ENCODE measurements at regions of chr9 and their contacts with region 1.

Region 1: DNA sequence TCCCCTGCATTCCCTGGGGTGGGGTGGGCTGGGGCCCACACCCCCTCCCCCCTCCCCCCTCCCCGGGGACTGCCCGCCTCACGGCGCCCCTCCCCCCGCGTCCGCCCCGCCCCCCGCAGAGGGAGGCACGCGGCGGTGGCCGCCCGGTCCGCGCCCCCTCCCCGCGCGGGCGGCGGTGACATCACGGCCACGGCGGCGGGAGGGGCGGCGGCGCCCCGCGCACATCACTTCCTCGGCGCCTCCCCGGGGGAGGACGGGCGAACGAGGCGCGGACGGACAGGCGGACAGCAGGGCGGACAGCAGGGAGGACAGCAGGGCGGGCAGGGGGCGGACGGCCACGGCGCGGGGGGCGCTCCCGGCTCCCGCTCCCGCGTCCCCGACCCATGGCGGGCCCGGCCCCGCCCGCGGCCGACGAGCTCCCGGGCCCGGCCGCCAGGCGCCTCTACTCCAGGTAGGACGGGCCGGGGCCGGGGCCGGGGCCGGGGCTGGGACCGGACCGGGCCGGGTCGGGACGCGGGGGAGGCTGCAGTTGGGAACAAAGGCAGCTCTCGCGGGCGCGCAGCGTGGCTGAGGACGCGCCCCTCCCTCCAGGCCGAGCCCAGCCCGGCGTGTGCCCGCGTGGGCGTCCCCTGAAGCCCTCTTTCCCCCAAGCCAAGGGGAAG is at the start of gene GPSM1:
- DNase-seq: peak; percentile 94
- H3K4me3 ChIP-seq: peak within 1 kb of the TSS; percentile 82 to 84
- H3K27ac ChIP-seq: peak within 1 kb of the TSS; percentile 87 to 98
- H3K4me1 ChIP-seq: peaks cover 24 to 50% of the 10 kb centered on the region in 2 experiments
- H3K27me3 ChIP-seq: no peaks in the 10 kb centered on the region
- CTCF ChIP-seq: no peak
- EP300 ChIP-seq: no peak; a peak in 1 of 4 replicates
- RAD21 ChIP-seq: no peak
- polyA plus RNA-seq, gene GPSM1: 22.8 and 26.7 TPM in 2 replicates

Region 2: GRCh38 chr9:136339173-136339957 is 11.9 kb after region 1 on chr9:
- CTCF ChIA-PET with region 1: interaction called, 10 read pairs
- POLR2A ChIA-PET with region 1: no interaction called
- DNase-seq: peak; percentile 83
- H3K4me3 ChIP-seq: peak overlapping the region in 1 of 2 experiments; percentile 29; a peak in 1 of 4 replicates
- H3K27ac ChIP-seq: no peak overlapping the region
- H3K4me1 ChIP-seq: no peaks in the 10 kb centered on the region; a peak in 1 of 4 replicates
- H3K27me3 ChIP-seq: no peaks in the 10 kb centered on the region
- CTCF ChIP-seq: peak; percentile 73
- EP300 ChIP-seq: no peak
- RAD21 ChIP-seq: peak; percentile 62

Region 3: GRCh38 chr9:136345281-136346156 is 18.1 kb after region 1 on chr9:
- CTCF ChIA-PET with region 1: interaction called, 25 read pairs
- POLR2A ChIA-PET with region 1: interaction called, 3 read pairs
- DNase-seq: peak; percentile 74
- H3K4me3 ChIP-seq: no peak overlapping the region
- H3K27ac ChIP-seq: peak overlapping the region in 1 of 2 experiments; percentile 58; a peak in 1 of 4 replicates
- H3K4me1 ChIP-seq: peaks cover 0 to 49% of the 10 kb centered on the region in 2 experiments; a peak in 1 of 4 replicates
- H3K27me3 ChIP-seq: no peaks in the 10 kb centered on the region
- CTCF ChIP-seq: peak; percentile 41
- EP300 ChIP-seq: no peak
- RAD21 ChIP-seq: peak; percentile 23

Region 4: GRCh38 chr9:136372561-136373299 is 45.3 kb after region 1 on chr9:
- CTCF ChIA-PET with region 1: interaction called, 14 read pairs
- POLR2A ChIA-PET with region 1: interaction called, 5 read pairs
- DNase-seq: peak; percentile 84
- H3K4me3 ChIP-seq: peak overlapping the region in 1 of 2 experiments; percentile 21; a peak in 1 of 4 replicates
- H3K27ac ChIP-seq: peak overlapping the region in 1 of 2 experiments; percentile 90; a peak in 2 of 4 replicates
- H3K4me1 ChIP-seq: peaks cover 0 to 43% of the 10 kb centered on the region in 2 experiments; a peak in 1 of 4 replicates
- H3K27me3 ChIP-seq: no peaks in the 10 kb centered on the region
- CTCF ChIP-seq: peak; percentile 21; the same call in 1 of the 2 replicates
- EP300 ChIP-seq: no peak; a peak in 1 of 4 replicates
- RAD21 ChIP-seq: peak; percentile 59